Activated naive CD4-positive, alpha-beta T cell treated with anti-CD3 and anti-CD28 coated beads for 36 hours (primary cell): ENCODE measurements at regions of chr12 and their contacts with region 1.

Region 1: GRCh38 chr12:94689002-94689645 is 38.8 kb upstream of the TMCC3 start:
- DNase-seq: no peak
- H3K4me3 Mint-ChIP-seq: no peak overlapping the region
- H3K27ac Mint-ChIP-seq: no peak overlapping the region
- H3K4me1 Mint-ChIP-seq: peaks cover 6% of the 10 kb centered on the region
- H3K27me3 Mint-ChIP-seq: no peaks in the 10 kb centered on the region

Region 2: GRCh38 chr12:94621664-94622359 is 67.3 kb before region 1 on chr12:
- CTCF ChIA-PET with region 1: no interaction called
- intact Hi-C with region 1: loop called (anchors 5 kb)
- DNase-seq: peak; percentile 66
- H3K4me3 Mint-ChIP-seq: no peak overlapping the region
- H3K27ac Mint-ChIP-seq: no peak overlapping the region
- H3K4me1 Mint-ChIP-seq: peaks cover 20% of the 10 kb centered on the region
- H3K27me3 Mint-ChIP-seq: no peaks in the 10 kb centered on the region

Region 3: DNA sequence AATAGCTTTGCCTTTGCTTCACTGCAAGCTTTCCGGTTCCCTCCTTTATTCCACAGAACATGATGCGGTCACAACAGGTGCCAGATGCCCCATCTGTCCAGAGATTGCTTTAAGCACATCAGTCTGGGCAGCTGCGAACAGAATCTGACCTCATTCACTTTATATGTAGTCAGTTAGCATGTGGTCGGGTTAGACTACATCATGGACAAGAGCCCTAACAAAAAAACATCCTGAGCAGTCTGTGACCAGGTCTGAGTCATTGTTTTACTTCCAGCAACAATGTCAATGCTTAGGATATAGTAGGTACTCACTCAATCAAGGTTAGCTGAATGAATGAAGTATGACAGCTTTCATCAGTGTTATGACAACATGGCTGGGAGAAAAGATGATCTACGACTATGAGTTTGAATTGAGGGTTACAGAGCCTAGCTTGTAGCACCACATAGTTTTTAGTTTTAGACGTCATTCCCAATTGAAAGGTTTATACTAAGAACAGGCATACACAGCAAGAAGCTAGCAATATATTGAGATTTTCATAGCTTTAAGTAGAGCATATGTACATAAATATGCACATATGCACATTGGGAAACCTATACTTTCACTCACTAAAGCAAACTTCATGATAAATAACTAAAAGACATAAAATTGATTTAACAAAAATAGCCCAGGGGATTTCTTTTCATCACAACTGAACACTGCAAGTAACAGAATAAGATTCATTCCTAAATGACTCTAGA is 25.4 kb after region 1 on chr12:
- CTCF ChIA-PET with region 1: no interaction called
- intact Hi-C with region 1: no loop called
- DNase-seq: no peak
- H3K4me3 Mint-ChIP-seq: no peak overlapping the region
- H3K27ac Mint-ChIP-seq: no peak overlapping the region
- H3K4me1 Mint-ChIP-seq: no peaks in the 10 kb centered on the region
- H3K27me3 Mint-ChIP-seq: no peaks in the 10 kb centered on the region